GM12878 (cell line): ENCODE measurements at regions of chrX and their contacts with region 1.

Region 1: DNA sequence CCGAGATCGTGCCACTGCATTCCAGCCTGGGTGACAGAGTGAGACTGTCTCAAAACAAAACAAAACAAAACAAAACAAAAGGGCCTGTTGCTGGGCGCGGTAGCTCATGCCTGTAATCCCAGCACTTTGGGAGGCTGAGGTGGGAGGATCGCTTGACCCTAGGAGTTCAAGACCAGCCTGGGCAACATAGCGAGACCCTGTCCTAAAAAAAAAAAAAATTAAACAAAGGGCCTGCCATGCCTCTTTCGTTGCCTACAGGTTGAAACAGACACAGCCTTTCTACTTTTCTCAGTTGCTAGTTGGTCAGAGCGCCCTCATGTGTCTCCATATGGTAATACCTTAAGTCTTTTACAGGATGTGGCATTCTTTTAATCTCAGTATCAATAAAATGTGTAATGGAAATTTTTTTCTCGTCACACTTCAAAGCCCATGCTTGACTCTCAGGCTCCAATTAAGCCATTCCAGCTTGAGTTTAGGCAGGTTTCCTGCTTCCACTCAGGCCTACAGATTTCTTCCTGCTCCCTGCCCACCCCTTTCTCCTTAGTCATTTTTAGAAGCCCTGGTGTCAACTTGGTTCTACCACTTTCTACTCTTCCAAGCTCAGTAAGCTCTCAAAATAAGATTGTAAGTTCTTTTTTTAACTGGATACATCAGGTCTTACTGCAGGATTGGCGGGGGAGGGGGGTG is 4.7 kb upstream of the SOWAHD start:
- DNase-seq: no peak
- ATAC-seq: peak; percentile 8; the same call in 1 of the 3 replicates
- H3K4me3 ChIP-seq: no peak overlapping the region
- H3K27ac ChIP-seq: peak overlapping the region; percentile 67
- H3K4me1 ChIP-seq: peaks cover 32% of the 10 kb centered on the region
- H3K27me3 ChIP-seq: no peaks in the 10 kb centered on the region
- CTCF ChIP-seq: peak; percentile 53 to 66 (median 61)
- EP300 ChIP-seq: no peak
- POLR2A ChIP-seq: no peak
- RAD21 ChIP-seq: peak; percentile 68

Region 2: GRCh38 chrX:119565107-119565663 is 188.5 kb before region 1 on chrX and contains the start of gene STEEP1:
- CTCF ChIA-PET with region 1: no interaction called
- POLR2A ChIA-PET with region 1: no interaction called
- RAD21 ChIA-PET with region 1: no interaction called
- SMC1A ChIA-PET with region 1: no interaction called
- in situ Hi-C with region 1: no loop called
- intact Hi-C with region 1: no loop called
- DNase-seq: peak; percentile 71
- ATAC-seq: peak; percentile 97
- H3K4me3 ChIP-seq: peak within 1 kb of the TSS; percentile 60
- H3K27ac ChIP-seq: peak within 1 kb of the TSS; percentile 50; the same call in 1 of the 2 replicates
- H3K4me1 ChIP-seq: no peaks in the 10 kb centered on the region
- H3K27me3 ChIP-seq: no peaks in the 10 kb centered on the region; a peak in 1 of 4 replicates
- CTCF ChIP-seq: no peak
- EP300 ChIP-seq: 0 out of 4 replicates have a peak, but pooled peaks of 1 of the 2 experiments have one; percentile 11
- POLR2A ChIP-seq: peak; percentile 61
- RAD21 ChIP-seq: no peak
- polyA plus RNA-seq, gene STEEP1: 15.1 to 17.8 TPM

Region 3: DNA sequence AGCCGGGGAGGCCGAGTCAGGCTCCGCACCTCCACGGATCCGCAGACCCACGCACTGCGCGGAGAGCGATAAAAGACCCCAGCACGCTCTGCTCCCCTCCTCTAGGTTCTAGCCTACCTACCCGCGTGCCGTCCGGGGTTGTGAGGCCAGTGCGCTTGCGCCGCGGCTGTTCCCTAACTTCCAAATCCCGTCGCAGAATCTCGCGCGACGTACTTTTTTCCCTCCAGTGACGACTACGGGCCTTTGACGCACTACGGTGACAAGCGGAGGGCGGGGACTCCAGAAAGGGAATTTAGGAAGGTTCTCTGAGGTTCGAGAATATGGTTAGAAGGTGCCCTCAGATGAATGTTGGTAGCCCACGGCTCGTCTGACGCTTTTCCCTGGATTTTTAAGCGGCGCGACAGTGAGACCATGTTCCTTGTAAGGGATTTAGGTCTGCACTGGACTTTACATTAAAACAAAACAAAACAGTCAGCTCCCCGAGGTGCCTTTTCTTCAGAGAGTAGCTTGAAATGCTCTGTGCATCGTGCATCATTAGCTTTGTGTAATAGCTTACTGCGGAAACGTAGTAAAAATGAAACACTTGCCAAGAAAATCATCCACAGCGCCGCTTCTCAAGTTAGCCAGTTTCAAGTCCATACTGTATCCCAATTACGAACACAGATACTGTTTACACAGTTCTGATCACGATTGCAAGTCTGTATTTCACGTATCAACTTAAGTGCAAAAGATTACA is 147.3 kb before region 1 on chrX and contains the start of gene NKRF:
- CTCF ChIA-PET with region 1: interaction called, 17 read pairs
- POLR2A ChIA-PET with region 1: interaction called, 6 read pairs
- RAD21 ChIA-PET with region 1: interaction called, 5 read pairs
- SMC1A ChIA-PET with region 1: interaction called, 8 read pairs
- in situ Hi-C with region 1: no loop called
- intact Hi-C with region 1: no loop called
- DNase-seq: peak; percentile 78
- ATAC-seq: peak; percentile 78
- H3K4me3 ChIP-seq: peak within 1 kb of the TSS; percentile 57
- H3K27ac ChIP-seq: peak within 1 kb of the TSS; percentile 85
- H3K4me1 ChIP-seq: no peaks in the 10 kb centered on the region; the same call in 1 of the 2 replicates
- H3K27me3 ChIP-seq: no peaks in the 10 kb centered on the region
- CTCF ChIP-seq: no peak
- EP300 ChIP-seq: no peak
- POLR2A ChIP-seq: peak; percentile 93
- RAD21 ChIP-seq: no peak
- polyA plus RNA-seq, gene NKRF: 6.2 to 9.5 TPM

Region 4: DNA sequence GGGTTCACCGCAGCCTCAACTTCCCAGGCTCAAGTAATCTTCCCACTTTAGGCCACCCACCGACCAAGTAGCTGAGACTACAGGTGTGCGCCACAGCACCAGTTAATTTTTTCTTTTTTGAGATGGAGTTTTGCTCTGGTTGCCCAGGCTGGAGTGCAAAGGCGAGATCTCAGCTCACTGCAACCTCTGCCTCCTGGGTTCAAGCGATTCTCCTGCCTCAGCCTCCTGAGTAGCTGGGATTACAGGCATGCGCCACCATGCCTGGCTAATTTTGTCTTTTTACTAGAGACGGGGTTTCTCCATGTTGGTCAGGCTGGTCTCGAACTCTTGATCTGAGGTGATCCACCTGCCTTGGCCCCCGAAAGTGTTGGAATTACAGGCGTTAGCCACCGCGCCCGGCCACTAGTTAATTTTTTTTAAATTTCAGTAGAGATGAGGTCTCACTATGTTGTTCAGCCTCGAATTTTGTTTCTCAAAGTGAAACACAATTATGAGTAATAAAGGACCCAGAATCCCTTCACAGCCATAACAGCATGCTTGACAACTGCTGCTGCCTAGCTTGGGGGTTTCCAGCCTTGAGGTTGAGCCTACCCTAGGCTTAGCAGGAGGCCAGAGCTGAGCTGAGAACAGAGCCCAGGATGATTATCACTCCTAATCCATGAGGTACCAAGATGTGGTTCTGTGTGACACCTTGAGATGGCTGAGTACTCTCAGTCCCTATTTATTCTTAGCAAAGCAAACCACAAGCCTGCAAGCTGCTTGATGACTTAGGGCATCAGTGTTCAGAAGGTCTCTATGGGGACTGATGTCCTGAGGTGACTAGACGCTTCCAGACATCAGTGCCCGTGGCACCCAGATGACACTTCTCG is 105.9 kb before region 1 on chrX:
- CTCF ChIA-PET with region 1: no interaction called
- POLR2A ChIA-PET with region 1: no interaction called
- RAD21 ChIA-PET with region 1: interaction called, 5 read pairs
- SMC1A ChIA-PET with region 1: interaction called, 5 read pairs
- in situ Hi-C with region 1: no loop called
- intact Hi-C with region 1: loop called (anchors 1 kb)
- DNase-seq: peak; percentile 98
- ATAC-seq: peak; percentile 95
- H3K4me3 ChIP-seq: 0 out of 2 replicates have a peak overlapping the region, but pooled peaks have one; percentile 11
- H3K27ac ChIP-seq: peak overlapping the region; percentile 89
- H3K4me1 ChIP-seq: peaks cover 47% of the 10 kb centered on the region
- H3K27me3 ChIP-seq: no peaks in the 10 kb centered on the region
- CTCF ChIP-seq: no peak
- EP300 ChIP-seq: peak; percentile 94 to 97
- POLR2A ChIP-seq: peak; percentile 53
- RAD21 ChIP-seq: no peak

Region 5: GRCh38 chrX:119693040-119693995 is 60.4 kb before region 1 on chrX and contains the start of gene SEPTIN6:
- CTCF ChIA-PET with region 1: interaction called, 5 read pairs
- POLR2A ChIA-PET with region 1: interaction called, 42 read pairs
- RAD21 ChIA-PET with region 1: interaction called, 6 read pairs
- SMC1A ChIA-PET with region 1: interaction called, 5 read pairs
- in situ Hi-C with region 1: no loop called
- intact Hi-C with region 1: no loop called
- DNase-seq: no peak
- ATAC-seq: peak; percentile 71
- H3K4me3 ChIP-seq: peak within 1 kb of the TSS; percentile 82
- H3K27ac ChIP-seq: peak within 1 kb of the TSS; percentile 83
- H3K4me1 ChIP-seq: peaks cover 24% of the 10 kb centered on the region
- H3K27me3 ChIP-seq: no peaks in the 10 kb centered on the region
- CTCF ChIP-seq: no peak
- EP300 ChIP-seq: no peak
- POLR2A ChIP-seq: peak; percentile 98
- RAD21 ChIP-seq: no peak
- polyA plus RNA-seq, gene SEPTIN6: 37.2 to 48.4 TPM

Region 6: DNA sequence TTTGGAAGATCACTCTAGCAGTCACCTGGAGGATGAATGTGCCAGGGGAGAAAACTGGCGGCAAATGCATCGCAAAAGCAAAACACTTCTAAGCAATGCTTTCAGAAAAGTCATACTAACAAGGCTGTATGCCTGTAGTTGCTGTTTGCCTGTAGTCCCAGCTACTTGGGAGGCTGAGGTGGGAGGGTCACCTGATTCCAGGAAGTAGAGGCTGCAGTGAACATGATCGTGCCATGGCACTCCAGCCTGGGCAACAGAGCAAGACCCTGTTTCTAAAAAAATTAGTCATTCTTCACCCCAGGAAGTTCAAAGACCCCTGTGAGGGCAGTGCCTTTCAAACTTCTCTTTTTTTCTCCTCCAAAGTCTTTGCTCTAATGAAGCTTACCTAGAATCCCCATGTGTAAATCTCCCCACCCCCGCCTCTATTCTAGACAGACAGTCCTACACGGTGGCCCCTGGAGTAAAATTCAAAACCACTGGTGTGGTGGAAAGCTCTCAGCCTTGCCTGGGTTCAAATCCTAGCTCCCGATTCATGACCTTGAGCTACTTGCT is 10.2 kb after region 1 on chrX:
- CTCF ChIA-PET with region 1: interaction called, 22 read pairs
- POLR2A ChIA-PET with region 1: interaction called, 12 read pairs
- RAD21 ChIA-PET with region 1: interaction called, 19 read pairs
- SMC1A ChIA-PET with region 1: interaction called, 15 read pairs
- in situ Hi-C with region 1: no loop called
- intact Hi-C with region 1: no loop called
- DNase-seq: no peak
- ATAC-seq: peak; percentile 28
- H3K4me3 ChIP-seq: no peak overlapping the region
- H3K27ac ChIP-seq: no peak overlapping the region
- H3K4me1 ChIP-seq: peaks cover 13% of the 10 kb centered on the region
- H3K27me3 ChIP-seq: no peaks in the 10 kb centered on the region
- CTCF ChIP-seq: no peak
- EP300 ChIP-seq: no peak
- POLR2A ChIP-seq: no peak
- RAD21 ChIP-seq: no peak

Region 7: DNA sequence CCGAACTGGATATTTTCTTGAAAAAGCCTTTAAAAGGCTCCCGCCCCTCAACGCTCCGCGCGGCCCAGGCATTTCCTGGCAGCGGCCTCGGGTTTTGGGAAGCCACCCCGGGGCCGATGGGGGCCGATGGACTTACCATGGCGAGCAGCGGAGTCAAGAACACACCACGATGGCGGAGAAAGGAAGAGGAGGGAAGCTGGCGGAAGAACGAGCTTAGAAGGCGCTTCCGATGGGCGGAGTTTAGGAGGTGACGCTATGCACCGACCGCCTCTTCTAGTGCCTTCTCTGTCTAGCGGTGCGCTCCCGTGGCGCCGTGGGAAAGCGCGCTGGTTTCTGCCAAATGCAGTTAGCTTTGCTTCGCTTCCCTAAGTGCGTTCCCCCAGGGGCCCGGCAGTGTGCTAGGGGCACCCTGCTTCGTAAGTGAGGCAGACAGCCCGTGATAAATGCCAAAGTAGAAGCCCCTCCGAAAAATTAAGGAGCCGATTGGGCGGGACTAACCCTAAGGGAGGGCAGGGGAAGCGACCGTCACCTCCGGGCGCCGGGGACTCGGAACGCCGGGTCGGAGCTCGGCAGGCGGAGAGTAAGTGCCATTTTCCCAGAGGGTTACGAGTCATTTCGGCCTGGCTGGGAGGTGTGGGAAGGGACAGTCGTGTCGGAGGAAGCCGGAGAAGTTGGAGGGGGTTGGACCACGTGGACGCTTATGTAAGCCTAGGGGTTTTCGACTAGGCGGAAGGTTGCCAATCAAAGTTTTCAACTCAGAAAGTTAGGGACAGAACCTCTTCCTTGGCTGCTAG is 37.9 kb after region 1 on chrX and contains the start of gene RPL39:
- CTCF ChIA-PET with region 1: interaction called, 10 read pairs
- POLR2A ChIA-PET with region 1: interaction called, 14 read pairs
- RAD21 ChIA-PET with region 1: interaction called, 11 read pairs
- SMC1A ChIA-PET with region 1: interaction called, 9 read pairs
- in situ Hi-C with region 1: no loop called
- intact Hi-C with region 1: no loop called
- DNase-seq: peak; percentile 51
- ATAC-seq: peak; percentile 90
- H3K4me3 ChIP-seq: peak within 1 kb of the TSS; percentile 76
- H3K27ac ChIP-seq: peak within 1 kb of the TSS; percentile 90
- H3K4me1 ChIP-seq: no peaks in the 10 kb centered on the region; the same call in 1 of the 2 replicates
- H3K27me3 ChIP-seq: no peaks in the 10 kb centered on the region
- CTCF ChIP-seq: no peak
- EP300 ChIP-seq: no peak
- POLR2A ChIP-seq: peak; percentile 96
- RAD21 ChIP-seq: no peak
- polyA plus RNA-seq, gene RPL39: 4,146 to 5,350 TPM